ENCODE measurements at regions of chr6 and their contacts with region 1.

Region 1: DNA sequence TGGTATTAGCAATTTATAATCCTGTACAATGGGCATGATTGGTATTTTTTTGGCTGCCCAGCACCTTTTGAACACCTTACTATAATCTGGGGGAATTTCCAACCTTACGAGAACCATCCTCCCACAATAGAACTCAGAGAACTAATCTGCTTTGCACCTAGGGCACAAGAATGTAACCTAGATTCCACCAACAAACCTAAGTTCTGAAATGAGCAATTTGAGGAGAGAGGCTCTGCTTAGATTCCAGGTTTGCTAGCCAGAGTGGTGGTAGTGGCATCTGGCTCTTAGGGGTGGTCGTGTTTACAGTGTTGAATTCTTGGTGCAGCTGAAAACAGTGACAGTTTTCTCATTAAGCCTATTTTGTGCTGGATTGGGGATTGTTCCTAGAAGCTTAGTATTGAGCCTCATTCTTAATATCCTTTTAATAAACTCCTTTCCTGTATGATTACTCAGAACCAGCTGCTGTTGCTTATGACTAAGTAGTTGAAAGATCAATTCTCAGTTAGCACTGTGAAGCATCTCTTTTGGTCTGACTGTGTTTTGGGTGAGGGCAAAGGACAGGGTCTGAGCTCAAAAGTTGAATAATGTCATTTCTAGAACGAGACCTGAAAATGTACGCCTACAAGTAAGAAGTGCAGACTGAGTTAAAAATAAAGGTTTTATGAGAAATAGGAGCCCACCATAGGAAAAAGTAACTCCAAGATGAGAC is 385.6 kb downstream of the CDKAL1 start:
- DNase-seq: no peak
- H3K4me3 ChIP-seq: no peak overlapping the region
- CTCF ChIP-seq: no peak

Region 2: DNA sequence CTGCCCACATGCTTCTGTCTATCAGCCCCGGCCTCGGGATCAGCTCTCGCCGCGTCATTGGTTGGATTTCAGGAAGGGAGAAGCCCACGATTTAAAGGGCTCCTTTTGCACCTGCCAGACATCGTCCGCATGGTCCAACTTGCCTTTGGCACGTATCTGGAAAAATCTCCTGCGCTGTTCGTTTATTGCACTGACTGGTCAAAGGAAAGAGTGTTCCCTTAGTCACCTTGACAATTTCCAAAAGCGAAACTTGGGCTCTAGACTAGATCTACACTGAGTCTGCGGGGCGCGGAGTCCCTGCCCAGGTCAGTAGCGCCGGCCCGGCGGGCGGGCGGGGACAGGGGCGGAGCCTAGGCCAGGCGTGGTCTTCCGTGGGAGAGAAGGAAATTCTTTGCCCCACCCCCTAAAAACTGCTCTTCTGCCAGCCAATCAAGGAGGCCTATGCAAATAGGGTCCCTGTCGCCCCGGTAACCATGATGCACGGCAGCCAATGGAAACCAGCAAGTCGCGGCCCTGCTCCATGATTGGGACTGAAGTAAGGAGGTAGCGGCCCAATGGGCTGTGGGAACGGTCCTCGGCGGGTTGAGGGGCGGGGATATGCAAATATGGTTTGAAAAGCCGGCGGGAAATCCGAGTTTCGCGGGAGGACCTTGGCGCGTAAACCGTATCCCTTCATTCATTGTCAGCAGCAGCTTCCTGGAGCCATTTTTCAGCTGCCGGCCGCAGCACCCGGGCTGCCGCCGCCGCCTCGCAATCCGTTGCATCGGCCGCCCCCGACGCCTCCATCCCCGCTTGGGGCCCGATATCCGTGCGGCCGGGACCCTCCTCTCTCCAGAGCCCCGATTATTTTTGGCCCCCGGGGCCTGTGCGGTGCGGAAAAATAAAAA is 518.4 kb before region 1 on chr6 and contains the start of gene E2F3:
- in situ Hi-C with region 1: no loop called
- DNase-seq: peak; percentile 100
- H3K4me3 ChIP-seq: peak within 1 kb of the TSS; percentile 74
- CTCF ChIP-seq: no peak

Region 3: DNA sequence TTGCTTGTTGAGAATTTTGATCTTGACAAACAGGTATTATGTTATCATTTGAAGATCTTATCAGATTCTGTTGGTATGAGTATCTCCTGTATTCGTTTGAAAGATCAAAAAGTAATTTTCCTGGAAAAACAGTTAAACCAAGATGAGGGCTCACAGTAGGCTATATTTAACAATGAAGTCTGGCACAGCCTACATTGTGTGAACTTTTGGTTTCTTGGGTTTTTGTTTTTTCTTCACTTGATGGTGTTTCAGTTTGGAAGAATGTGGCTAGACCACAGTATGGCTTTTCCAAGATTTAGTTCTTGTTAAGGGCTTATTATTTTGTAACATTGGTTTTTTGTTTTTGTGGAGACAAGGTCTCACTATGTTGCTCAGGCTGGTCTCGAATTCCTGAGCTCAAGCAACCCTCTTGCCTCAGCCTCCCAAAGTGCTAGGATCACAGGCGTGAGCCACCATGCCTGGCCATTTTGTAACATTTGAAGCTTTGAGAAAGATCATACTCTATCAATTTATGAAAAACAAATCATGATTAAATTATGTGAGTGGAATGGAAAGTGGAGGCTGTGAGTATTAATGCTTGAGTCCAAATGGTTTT is 79.1 kb before region 1 on chr6:
- in situ Hi-C with region 1: no loop called
- DNase-seq: peak; percentile 78
- H3K4me3 ChIP-seq: no peak overlapping the region
- CTCF ChIP-seq: no peak

Region 4: DNA sequence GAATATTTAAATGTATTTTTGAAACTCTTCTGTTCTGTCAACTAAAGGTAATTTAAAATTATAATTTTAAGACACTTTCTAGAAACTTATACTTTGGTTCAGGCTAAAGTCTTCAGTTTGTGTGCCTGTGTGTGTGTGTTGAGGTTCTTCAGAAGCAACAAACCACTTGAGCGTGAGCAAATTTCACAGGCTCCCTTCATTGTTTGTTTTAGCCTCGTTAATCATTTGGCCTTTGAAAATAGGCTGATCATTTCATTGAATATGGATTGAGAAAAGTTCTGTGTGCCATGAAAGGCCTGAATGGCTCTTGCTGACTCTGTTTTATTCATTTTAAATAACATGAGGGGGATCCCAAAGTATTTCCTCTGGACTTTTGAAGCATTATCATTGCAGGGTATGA is 34.5 kb after region 1 on chr6:
- in situ Hi-C with region 1: no loop called
- DNase-seq: no peak
- H3K4me3 ChIP-seq: no peak overlapping the region
- CTCF ChIP-seq: no peak

Region 5: DNA sequence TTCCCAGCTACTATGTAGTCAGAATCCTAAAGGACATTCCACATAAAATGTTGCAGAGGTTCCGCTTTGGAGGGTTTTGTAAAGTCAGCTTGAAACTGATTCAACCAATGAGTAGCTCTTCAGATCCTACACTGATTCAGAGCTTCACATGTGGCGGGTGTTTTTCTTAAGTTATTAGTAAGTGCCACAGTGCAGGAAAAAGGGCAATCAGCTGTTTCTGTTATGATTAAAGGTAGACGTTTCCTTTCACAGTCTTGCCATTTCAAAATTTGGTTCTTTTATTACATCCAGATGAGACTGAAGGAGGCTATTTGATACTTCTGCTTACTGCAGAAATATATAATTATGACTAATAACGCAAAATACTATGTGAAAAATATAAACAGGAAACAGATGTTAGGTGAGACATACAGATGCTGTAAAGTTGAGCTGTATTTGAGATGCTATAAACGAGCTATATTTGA is 58.4 kb after region 1 on chr6:
- in situ Hi-C with region 1: loop called (anchors 5 kb)
- DNase-seq: no peak
- H3K4me3 ChIP-seq: no peak overlapping the region
- CTCF ChIP-seq: no peak

Measured in astrocyte of the cerebellum (primary cell).